Psoas muscle (tissue), 8 donors: ENCODE measurements at regions of chr5 and their contacts with region 1.

Region 1: GRCh38 chr5:31137676-31138075 is 55.8 kb upstream of the CDH6 start:
- DNase-seq: no peak
- ATAC-seq: no peak
- H3K4me3 ChIP-seq: no peak overlapping the region
- H3K27ac ChIP-seq: no peak overlapping the region
- H3K4me1 ChIP-seq: no peaks in the 10 kb centered on the region
- H3K27me3 ChIP-seq: no peaks in the 10 kb centered on the region
- CTCF ChIP-seq: no peak

Region 2: GRCh38 chr5:31095796-31096195 is 41.9 kb before region 1 on chr5:
- intact Hi-C with region 1: loop called in 1 of 2 experiments (anchors 1 kb)
- DNase-seq: no peak
- ATAC-seq: no peak
- H3K4me3 ChIP-seq: no peak overlapping the region
- H3K27ac ChIP-seq: no peak overlapping the region
- H3K4me1 ChIP-seq: no peaks in the 10 kb centered on the region
- H3K27me3 ChIP-seq: no peaks in the 10 kb centered on the region
- CTCF ChIP-seq: no peak

Region 3: DNA sequence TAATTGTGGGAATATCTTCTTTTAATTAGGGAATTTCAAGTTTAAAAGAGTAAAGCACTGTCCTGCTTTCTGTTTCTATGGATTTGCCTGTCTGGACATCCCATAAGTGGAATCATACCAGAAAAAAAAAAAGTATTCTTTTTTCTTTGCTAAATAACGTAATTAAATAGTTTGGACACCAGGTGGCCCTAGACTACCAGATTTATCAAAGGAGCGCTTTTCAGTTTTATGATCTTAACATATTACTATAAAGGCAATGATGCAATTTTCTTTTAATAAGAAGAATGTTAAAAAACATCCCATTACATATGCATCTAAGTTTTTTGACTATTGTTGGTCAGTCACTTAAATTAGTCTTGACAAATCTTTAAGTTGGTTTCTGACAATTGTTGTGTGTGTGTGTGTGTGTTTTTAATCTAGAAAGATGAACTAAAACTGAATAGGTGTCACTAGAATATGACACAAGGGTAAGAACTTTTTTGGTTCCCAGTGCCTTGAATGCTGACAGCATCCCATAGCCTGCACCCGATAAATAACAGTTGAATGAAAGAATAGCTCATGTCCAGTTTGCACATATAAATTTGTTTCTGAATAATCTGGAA is 443.9 kb after region 1 on chr5:
- intact Hi-C with region 1: no loop called
- DNase-seq: no peak
- ATAC-seq: peak in 1 of 4 donors; percentile 30
- H3K4me3 ChIP-seq: no peak overlapping the region
- H3K27ac ChIP-seq: no peak overlapping the region
- H3K4me1 ChIP-seq: no peaks in the 10 kb centered on the region
- H3K27me3 ChIP-seq: peaks cover 0 to 1% (median 0%) of the 10 kb centered on the region in 3 donors
- CTCF ChIP-seq: peak; percentile 46